ENCODE measurements at regions of chr11 and their contacts with region 1.

Region 1: DNA sequence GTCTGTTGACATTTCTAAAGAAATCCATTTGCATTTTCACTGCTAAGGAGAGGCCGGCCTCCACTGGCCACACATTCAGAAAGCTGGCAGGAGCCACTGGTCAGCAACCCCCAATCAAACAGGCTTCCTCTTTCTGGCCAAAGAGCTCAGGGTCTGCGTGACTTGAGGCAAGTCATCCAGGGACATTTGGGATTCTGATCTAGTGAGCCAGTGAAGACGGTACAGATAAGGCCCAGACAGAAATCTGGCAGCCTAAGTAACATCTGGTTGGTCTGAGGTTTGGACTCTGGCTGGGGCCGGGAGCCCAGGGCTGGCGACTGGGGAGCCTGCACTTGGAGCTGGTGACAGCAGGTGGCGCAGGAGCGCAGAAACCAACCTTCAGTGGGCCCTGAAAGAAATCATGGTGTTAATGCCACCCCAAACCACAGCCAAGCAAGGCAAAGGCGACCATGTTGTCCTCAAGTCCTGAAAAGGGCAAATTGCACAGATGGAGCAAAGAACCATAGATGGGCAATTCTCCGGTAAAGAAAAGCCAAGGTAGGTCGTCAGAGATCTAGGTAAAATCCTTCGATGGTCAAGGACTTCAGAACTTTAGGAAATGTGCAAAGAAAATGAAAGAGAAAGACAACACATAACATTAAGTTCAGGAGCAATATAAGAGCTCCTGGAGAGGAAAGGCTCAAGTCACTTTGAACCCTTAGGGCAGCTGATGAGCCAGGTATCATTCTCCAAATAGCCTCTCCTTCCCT is 99.4 kb upstream of the BLID start:
- DNase-seq: peak; percentile 63 to 97 (median 78)

Region 2: DNA sequence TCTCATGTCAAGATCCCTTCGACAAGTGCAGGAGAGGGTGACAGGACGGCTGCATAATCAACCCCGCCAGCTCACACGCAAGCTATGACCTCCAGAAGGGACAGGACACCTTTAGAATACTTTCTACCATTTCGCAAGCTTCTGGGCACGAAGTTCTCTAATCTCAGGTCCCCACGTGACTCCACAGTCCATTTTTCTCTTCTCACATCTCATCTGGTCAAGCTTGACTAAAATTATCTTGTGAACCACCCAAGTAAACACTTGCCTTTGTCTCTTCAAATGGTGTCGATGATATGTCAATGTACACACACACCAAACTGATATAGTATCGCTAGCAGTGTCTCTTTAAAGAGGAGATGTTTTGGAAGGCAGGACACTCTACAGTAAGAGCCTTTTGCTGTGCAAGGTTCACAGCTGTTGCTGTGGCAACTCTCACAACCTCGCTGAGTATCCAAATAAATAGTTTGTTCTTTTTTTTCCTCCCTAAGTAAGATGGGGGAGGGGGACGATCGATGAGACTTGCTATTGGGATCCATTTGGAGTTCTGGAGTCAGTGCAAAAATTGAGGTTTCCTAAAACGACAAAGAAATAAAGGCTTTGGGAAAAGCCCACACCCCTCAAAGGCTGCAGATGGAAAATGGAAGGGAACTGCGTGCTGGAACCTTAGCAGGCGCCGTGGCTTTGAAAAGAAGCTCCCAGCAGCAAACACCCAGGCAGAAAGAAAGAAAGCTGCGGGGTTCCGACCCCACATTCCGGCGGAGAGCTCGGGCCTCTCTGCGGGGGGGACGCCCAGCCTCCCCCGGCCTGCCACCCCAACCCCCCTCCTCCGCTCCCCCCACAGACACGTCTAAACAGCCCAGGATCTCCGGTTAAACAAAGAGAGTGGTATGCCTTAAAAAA is 224.7 kb after region 1 on chr11:
- intact Hi-C with region 1: loop called (anchors 10 kb)
- DNase-seq: peak in 6 of 10 donors; percentile 20 to 86 (median 35)

Measured in posterior cingulate gyrus (tissue), 11 donors.